Activated CD4-positive, alpha-beta T cell treated with anti-CD3 and anti-CD28 coated beads for 36 hours (primary cell): ENCODE measurements at regions of chr6 and their contacts with region 1.

Region 1: GRCh38 chr6:87154993-87155841 is at the start of gene ZNF292:
- DNase-seq: peak; percentile 99
- ATAC-seq: peak; percentile 86
- H3K4me3 Mint-ChIP-seq: peak within 1 kb of the TSS; percentile 100
- H3K27ac Mint-ChIP-seq: peak within 1 kb of the TSS; percentile 99
- H3K4me1 Mint-ChIP-seq: peaks cover 48% of the 10 kb centered on the region
- H3K27me3 Mint-ChIP-seq: no peaks in the 10 kb centered on the region
- total RNA-seq, gene ZNF292: 68.8 to 81.8 TPM

Region 2: GRCh38 chr6:87049779-87050178 is 105.4 kb before region 1 on chr6:
- CTCF ChIA-PET with region 1: no interaction called
- POLR2A ChIA-PET with region 1: no interaction called
- intact Hi-C with region 1: no loop called
- DNase-seq: no peak
- ATAC-seq: no peak
- H3K4me3 Mint-ChIP-seq: no peak overlapping the region
- H3K27ac Mint-ChIP-seq: no peak overlapping the region
- H3K4me1 Mint-ChIP-seq: no peaks in the 10 kb centered on the region
- H3K27me3 Mint-ChIP-seq: peaks cover 15% of the 10 kb centered on the region

Region 3: GRCh38 chr6:87139236-87139635 is 16.0 kb before region 1 on chr6:
- CTCF ChIA-PET with region 1: interaction called, 16 read pairs
- POLR2A ChIA-PET with region 1: no interaction called
- intact Hi-C with region 1: no loop called
- DNase-seq: peak; percentile 43
- ATAC-seq: peak; percentile 70
- H3K4me3 Mint-ChIP-seq: no peak overlapping the region
- H3K27ac Mint-ChIP-seq: no peak overlapping the region
- H3K4me1 Mint-ChIP-seq: peaks cover 2% of the 10 kb centered on the region
- H3K27me3 Mint-ChIP-seq: peaks cover 7% of the 10 kb centered on the region

Region 4: GRCh38 chr6:87210979-87211378 is 55.8 kb after region 1 on chr6:
- CTCF ChIA-PET with region 1: no interaction called
- POLR2A ChIA-PET with region 1: no interaction called
- intact Hi-C with region 1: loop called (anchors 2 kb)
- DNase-seq: peak; percentile 61
- ATAC-seq: peak; percentile 99
- H3K4me3 Mint-ChIP-seq: no peak overlapping the region
- H3K27ac Mint-ChIP-seq: peak overlapping the region; percentile 71
- H3K4me1 Mint-ChIP-seq: peaks cover 73% of the 10 kb centered on the region
- H3K27me3 Mint-ChIP-seq: no peaks in the 10 kb centered on the region

Region 5: DNA sequence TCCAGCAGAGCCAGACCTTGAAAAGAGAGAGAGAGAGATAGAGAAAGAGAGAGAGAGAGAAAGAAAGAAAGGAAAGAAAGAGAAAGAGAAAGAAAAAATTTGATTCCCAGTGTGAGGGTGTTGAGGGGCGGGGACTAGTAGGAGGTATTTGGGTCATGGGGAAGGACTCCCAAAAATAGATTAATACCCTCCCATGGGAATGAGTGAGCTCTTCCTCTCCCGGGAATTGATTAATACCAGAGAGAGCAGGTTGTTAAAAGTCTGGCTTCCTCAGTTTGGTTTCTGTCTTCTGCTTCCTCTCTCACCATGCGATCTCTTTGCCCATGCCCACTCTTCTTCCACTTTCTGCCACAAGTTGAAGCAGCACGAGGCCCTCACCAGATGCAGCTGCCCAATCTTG is 223.7 kb after region 1 on chr6:
- CTCF ChIA-PET with region 1: no interaction called
- POLR2A ChIA-PET with region 1: no interaction called
- intact Hi-C with region 1: no loop called
- DNase-seq: no peak
- ATAC-seq: no peak
- H3K4me3 Mint-ChIP-seq: no peak overlapping the region
- H3K27ac Mint-ChIP-seq: no peak overlapping the region
- H3K4me1 Mint-ChIP-seq: peaks cover 3% of the 10 kb centered on the region
- H3K27me3 Mint-ChIP-seq: no peaks in the 10 kb centered on the region

Region 6: GRCh38 chr6:87407901-87408720 is 252.9 kb after region 1 on chr6 and contains the start of gene CFAP206:
- CTCF ChIA-PET with region 1: no interaction called
- POLR2A ChIA-PET with region 1: no interaction called
- intact Hi-C with region 1: loop called (anchors 1 kb)
- DNase-seq: peak; percentile 89
- ATAC-seq: peak; percentile 85
- H3K4me3 Mint-ChIP-seq: peak within 1 kb of the TSS; percentile 70
- H3K27ac Mint-ChIP-seq: no peak within 1 kb of the TSS
- H3K4me1 Mint-ChIP-seq: peaks cover 4% of the 10 kb centered on the region
- H3K27me3 Mint-ChIP-seq: peaks cover 15% of the 10 kb centered on the region
- total RNA-seq, gene CFAP206: not detected

Region 7: GRCh38 chr6:87701676-87702588 is 546.7 kb after region 1 on chr6 and contains the start of gene AKIRIN2:
- CTCF ChIA-PET with region 1: no interaction called
- POLR2A ChIA-PET with region 1: no interaction called
- intact Hi-C with region 1: loop called (anchors 1 to 2 kb)
- DNase-seq: peak; percentile 98
- ATAC-seq: peak; percentile 75
- H3K4me3 Mint-ChIP-seq: peak within 1 kb of the TSS; percentile 87
- H3K27ac Mint-ChIP-seq: peak within 1 kb of the TSS; percentile 92
- H3K4me1 Mint-ChIP-seq: peaks cover 45% of the 10 kb centered on the region
- H3K27me3 Mint-ChIP-seq: no peaks in the 10 kb centered on the region
- total RNA-seq, gene AKIRIN2: 41.4 to 46.3 TPM

Region 8: DNA sequence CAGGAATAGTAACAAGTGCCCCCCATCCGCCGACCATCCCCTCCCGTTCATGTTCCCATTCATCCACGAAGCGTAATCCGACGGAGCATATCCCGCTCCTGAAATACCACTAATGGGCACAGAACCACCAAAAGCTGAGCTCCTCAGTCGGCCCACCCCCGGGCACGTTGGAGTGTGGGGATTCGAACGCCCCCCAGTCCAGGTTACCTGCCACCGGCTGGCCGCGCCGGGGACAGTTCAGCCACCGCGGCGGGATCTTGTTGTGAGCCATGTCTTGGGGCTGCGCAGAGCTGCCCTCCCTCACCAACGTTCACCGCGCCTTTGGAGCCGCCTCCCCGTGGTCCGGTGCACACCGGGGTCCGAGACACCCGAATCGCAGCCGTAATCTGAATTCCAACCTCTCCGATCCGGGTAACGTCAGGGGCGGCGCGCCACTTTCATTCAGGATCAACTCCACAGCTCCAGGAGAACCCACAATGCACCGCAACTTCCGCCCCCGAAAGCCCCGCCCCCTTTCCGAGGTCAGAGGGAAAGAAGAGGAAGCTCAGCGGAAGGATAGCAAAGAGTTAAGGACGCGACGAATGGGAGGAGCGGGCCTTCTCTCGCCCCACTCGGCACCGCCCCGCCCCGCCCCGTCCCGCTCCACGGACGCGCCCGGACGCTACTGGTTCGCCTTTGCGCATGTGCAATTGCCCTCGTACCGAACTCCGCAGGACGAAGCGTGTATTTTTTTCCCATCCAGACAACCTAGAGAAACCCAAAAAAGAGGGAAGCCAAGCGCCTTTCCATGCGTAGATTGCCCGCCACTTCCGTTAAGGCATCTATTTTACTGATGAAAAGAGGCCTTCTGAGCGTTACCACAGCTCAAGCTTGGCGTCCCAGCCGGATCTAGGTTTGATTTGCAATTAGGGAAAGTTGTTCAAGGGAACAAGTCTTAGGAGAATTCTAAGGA is 1808.2 kb after region 1 on chr6 and contains the start of gene RNGTT:
- CTCF ChIA-PET with region 1: no interaction called
- POLR2A ChIA-PET with region 1: no interaction called
- intact Hi-C with region 1: loop called in 1 of 2 experiments (anchors 1 kb)
- DNase-seq: peak; percentile 99
- ATAC-seq: peak; percentile 100
- H3K4me3 Mint-ChIP-seq: peak within 1 kb of the TSS; percentile 99
- H3K27ac Mint-ChIP-seq: peak within 1 kb of the TSS; percentile 93
- H3K4me1 Mint-ChIP-seq: peaks cover 45% of the 10 kb centered on the region
- H3K27me3 Mint-ChIP-seq: no peaks in the 10 kb centered on the region
- total RNA-seq, gene RNGTT: 17.5 to 21.5 TPM